Activated naive CD4-positive, alpha-beta T cell treated with anti-CD3 and anti-CD28 coated beads, Interleukin-2, amount 10 ng/mL, durations not matched to agents 7 days and 5 days (primary cell): ENCODE measurements at regions of chr15 and their contacts with region 1.

Region 1: DNA sequence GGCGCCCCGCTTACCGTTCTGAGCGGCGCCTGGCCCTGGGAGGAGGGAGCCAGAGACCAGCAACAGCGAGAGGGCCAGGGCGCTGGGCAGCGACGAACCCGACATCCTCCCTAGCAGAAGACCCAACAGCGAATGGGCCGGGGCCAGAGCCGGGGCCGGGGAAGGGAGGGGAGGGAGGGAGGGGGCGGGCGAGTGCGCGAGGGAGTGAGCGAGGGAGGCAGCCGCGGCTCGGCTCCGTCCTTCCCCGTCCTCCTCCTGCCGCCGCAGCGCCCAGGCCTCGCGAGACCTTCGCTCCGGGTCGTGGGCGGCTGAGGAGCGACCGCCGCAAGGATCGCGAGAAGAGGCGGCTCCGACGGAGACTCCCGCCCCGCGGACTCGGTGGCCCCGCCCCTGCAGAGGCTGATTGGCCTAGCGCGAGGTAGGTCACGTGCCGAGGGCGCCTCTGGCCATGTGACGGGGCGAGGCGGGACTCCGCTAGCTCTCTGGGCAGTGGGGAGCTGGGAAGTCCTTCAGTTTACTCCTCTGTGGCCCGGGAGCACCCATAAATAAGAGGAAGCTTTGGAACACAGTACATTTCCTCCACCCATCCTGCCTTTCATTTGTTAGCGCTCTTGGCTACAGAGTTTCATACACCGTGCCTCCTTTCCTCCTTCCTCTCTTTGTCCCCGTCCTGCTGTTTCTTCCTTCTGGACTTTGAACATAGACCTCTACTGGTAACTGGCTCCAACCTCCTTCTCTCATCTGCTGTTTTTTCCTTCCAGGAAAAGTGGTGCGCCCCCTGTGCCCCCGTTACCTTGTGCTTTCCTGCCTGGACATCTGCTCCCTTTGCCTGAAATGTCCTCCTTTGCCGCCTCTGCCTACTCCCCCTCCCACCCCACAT is at the start of gene NPTN:
- DNase-seq: peak; percentile 98
- H3K4me3 Mint-ChIP-seq: peak within 1 kb of the TSS; percentile 81
- H3K27ac Mint-ChIP-seq: peak within 1 kb of the TSS; percentile 78
- H3K4me1 Mint-ChIP-seq: peaks cover 37% of the 10 kb centered on the region
- H3K27me3 Mint-ChIP-seq: peaks cover 20% of the 10 kb centered on the region

Region 2: GRCh38 chr15:73560501-73561117 is 72.7 kb before region 1 on chr15:
- CTCF ChIA-PET with region 1: interaction called, 79 read pairs
- DNase-seq: no peak
- H3K4me3 Mint-ChIP-seq: no peak overlapping the region
- H3K27ac Mint-ChIP-seq: no peak overlapping the region
- H3K4me1 Mint-ChIP-seq: peaks cover 6% of the 10 kb centered on the region
- H3K27me3 Mint-ChIP-seq: no peaks in the 10 kb centered on the region

Region 3: GRCh38 chr15:73617301-73617831 is 16.0 kb before region 1 on chr15:
- CTCF ChIA-PET with region 1: interaction called, 26 read pairs
- DNase-seq: no peak
- H3K4me3 Mint-ChIP-seq: no peak overlapping the region
- H3K27ac Mint-ChIP-seq: no peak overlapping the region
- H3K4me1 Mint-ChIP-seq: peaks cover 8% of the 10 kb centered on the region
- H3K27me3 Mint-ChIP-seq: no peaks in the 10 kb centered on the region

Region 4: DNA sequence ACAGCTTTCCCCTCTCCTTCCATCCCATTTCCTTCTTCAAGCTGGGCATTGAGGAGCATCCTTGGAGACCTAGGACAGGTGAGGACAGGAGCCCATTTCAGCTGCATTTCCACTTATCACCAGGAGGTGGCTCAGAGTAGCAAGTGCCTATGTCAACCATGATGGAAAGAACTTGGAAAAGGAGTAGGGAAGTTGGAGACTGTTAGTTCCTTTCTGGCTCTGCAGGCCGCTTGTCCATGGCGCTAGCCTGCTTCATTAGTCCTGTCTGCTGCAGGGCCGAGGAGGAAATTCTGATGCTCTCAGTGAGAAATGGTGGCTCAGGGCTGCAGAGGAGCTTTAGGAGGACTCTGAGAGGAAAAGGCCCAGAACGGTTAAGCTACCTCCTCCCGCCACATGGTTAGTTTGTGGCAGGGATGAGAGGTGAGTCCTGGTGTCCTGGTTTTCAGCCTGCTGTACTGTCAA is 43.8 kb after region 1 on chr15:
- CTCF ChIA-PET with region 1: interaction called, 27 read pairs
- DNase-seq: peak; percentile 68
- H3K4me3 Mint-ChIP-seq: no peak overlapping the region
- H3K27ac Mint-ChIP-seq: no peak overlapping the region
- H3K4me1 Mint-ChIP-seq: peaks cover 2% of the 10 kb centered on the region
- H3K27me3 Mint-ChIP-seq: peaks cover 39% of the 10 kb centered on the region

Region 5: GRCh38 chr15:73697033-73697467 is 63.7 kb after region 1 on chr15:
- CTCF ChIA-PET with region 1: interaction called, 275 read pairs
- DNase-seq: peak; percentile 88
- H3K4me3 Mint-ChIP-seq: no peak overlapping the region
- H3K27ac Mint-ChIP-seq: peak overlapping the region; percentile 66
- H3K4me1 Mint-ChIP-seq: peaks cover 25% of the 10 kb centered on the region
- H3K27me3 Mint-ChIP-seq: peaks cover 84% of the 10 kb centered on the region

Region 6: DNA sequence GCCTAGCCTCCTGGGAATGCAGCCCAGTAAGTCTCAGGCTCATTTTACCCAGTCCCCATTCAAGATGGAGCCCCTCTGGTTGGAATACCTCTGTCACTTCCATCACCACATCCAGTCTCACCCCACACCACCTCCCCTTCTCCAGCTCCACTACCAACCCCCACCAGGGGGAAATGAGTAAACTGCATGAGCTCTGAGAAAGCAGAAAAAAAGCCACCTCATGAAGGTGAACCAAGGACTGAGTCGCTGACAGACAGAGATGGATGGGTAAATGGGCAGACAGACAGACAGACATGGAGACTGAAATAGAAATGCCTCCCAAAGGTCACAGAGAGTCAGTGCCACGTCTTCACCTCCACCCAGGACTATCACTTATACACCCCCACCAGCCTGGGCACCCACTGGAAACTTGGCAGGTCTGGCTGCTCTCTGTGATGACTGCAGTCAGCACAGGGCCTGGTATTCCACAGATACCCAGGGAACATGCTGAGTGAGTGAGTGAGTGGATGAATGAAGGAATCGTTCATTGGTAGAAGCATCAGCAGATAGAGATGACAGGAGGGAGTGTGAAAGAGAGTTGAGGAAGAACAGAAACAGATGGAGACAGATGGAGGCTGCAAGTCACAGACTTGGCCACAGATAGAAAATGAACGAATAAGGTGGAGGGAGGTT is 288.0 kb after region 1 on chr15:
- CTCF ChIA-PET with region 1: no interaction called
- DNase-seq: no peak
- H3K4me3 Mint-ChIP-seq: no peak overlapping the region
- H3K27ac Mint-ChIP-seq: peak overlapping the region; percentile 29
- H3K4me1 Mint-ChIP-seq: peaks cover 54% of the 10 kb centered on the region
- H3K27me3 Mint-ChIP-seq: peaks cover 19% of the 10 kb centered on the region